Right ventricle myocardium superior (tissue), 1 donor: ENCODE measurements at regions of chr5 and their contacts with region 1.

Region 1: DNA sequence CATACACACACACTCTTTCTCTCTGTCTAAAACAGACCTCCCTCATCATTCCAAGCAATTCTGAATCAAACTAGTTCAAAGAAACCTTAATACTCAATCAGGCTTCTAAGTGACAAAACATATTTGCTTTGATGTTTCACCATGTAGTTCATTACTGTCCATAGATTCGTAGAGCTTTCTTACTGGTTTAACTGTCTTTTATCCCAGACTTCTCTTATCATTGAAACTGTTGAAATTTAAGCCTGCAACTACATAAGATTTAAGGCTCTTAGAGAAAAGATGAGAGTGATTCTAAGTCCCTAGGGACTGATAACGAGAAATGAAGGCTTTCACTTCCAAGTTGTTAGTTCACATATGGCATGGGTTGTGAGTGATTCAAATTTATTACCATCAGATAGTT is 11.0 kb upstream of the PLAC8L1 start:
- DNase-seq: no peak
- ATAC-seq: no peak

Region 2: GRCh38 chr5:146059460-146060220 is 56.7 kb before region 1 on chr5:
- intact Hi-C with region 1: loop called (anchors 5 kb)
- DNase-seq: peak; percentile 66
- ATAC-seq: peak; percentile 86